Heart left ventricle (tissue), 16 donors: ENCODE measurements at regions of chr2 and their contacts with region 1.

Region 1: DNA sequence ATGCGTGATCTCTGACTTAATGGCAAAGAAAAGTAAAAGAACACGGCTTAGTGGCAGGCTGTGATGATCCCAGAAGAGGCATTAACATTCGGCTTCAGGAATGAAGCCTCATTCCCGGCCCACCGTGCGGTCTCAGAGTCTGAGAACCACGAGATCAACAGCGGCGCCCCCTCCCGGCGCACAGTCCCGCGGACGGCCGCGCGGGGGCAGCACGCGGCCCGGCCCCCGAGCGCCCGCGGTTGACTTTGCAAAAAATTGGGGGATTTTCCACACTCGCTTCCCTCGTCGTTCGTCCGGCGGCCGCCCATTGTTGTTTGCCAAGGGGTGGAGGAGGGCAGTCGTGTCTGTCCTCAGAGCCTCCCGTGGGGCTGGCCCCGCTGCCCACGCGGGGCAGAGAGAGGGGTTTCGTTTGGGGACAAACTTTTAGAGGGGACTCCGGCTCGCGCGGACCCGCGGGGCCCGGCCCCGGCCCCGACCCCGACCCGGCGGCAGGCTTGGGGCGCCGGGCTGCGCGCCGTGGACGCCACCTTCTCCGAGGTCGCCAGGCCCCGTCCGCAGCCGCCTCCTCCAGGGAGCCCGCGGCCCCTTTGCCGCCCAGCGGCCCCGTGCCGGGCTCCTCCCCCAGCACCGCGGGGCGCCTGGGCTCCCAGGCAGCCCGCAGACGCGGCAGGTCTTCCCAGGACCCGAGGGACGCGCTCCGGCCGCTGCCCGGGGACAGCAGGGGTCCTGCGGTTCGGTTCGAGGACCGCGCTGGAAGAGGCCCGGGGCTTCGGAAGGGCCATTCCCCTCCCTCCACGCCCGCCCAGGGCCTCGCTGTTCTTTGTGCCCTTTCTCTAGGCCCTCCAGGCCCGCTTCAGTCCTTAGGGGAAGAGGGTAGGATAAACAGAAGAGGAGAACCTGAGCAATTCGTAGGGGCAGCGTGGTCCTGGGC is 3.4 kb upstream of the HS6ST1 start:
- DNase-seq: peak; percentile 84 to 94 (median 88)
- ATAC-seq: peak; percentile 8 to 72 (median 70)
- H3K4me3 ChIP-seq: peak overlapping the region; percentile 31 to 76 (median 57)
- H3K27ac ChIP-seq: peak overlapping the region; percentile 18 to 79 (median 72)
- H3K4me1 ChIP-seq: peaks cover 2 to 42% (median 18%) of the 10 kb centered on the region in 12 donors
- H3K27me3 ChIP-seq: no peaks in the 10 kb centered on the region
- CTCF ChIP-seq: peak; percentile 92 to 100 (median 99)
- POLR2A ChIP-seq: peak in 1 of 2 donors; percentile 64

Region 2: DNA sequence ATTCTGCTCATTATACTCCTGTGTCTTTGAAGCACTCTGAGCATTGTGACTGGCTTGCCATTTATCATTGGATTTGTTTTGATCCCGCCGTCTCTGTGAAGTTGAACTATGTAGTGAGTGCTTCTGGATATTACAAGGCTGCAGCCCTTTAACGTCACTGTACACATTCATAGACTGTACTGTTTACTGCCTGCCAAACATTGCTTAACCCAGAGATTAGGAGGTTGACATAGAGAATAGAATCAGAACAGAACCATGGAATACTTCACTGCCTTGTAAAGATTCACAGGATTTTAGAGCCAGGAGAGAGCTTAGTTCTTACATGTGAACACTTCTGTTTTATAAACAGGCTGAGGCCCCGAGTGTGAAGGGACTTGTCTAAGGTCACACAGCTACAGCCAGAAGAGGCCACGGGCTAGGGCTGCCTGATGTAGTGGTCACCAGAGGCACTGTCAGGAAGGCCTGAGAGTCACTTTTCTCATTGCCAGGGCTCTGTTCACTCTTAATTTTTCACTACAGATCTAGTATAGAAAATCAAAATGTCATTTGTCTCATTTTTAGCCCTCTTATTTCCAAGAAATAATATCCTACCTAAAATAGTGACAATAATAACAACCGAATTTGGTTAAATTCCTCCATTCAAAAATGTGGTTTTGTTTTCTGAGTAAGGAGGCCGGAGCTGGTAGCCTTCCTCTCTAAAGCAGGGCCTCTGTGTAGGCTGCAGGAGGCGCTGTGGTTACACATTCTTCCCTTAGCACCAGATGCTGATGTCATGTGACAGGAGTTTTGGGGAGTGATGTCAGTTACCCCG is 143.2 kb before region 1 on chr2:
- intact Hi-C with region 1: loop called in 6 of 10 experiments (anchors 5 to 10 kb)
- DNase-seq: peak in 4 of 5 donors; percentile 39 to 59 (median 55)
- ATAC-seq: peak; percentile 96 to 98 (median 98)
- H3K4me3 ChIP-seq: no peak overlapping the region
- H3K27ac ChIP-seq: peak overlapping the region in 11 of 12 donors; percentile 34 to 89 (median 80)
- H3K4me1 ChIP-seq: peaks cover 0 to 15% (median 3%) of the 10 kb centered on the region in 12 donors
- H3K27me3 ChIP-seq: no peaks in the 10 kb centered on the region
- CTCF ChIP-seq: peak; percentile 38 to 84 (median 69)
- POLR2A ChIP-seq: no peak

Region 3: GRCh38 chr2:128280158-128280871 is 41.7 kb before region 1 on chr2:
- intact Hi-C with region 1: loop called in 1 of 10 experiments (anchors 5 kb)
- DNase-seq: peak in 3 of 5 donors; percentile 26 to 69 (median 48)
- ATAC-seq: peak in 3 of 4 donors; percentile 4 to 54 (median 5)
- H3K4me3 ChIP-seq: peak overlapping the region in 1 of 12 donors; percentile 15
- H3K27ac ChIP-seq: peak overlapping the region in 5 of 12 donors; percentile 23 to 78 (median 33)
- H3K4me1 ChIP-seq: peaks cover 0 to 55% (median 38%) of the 10 kb centered on the region in 12 donors
- H3K27me3 ChIP-seq: no peaks in the 10 kb centered on the region
- CTCF ChIP-seq: no peak
- POLR2A ChIP-seq: no peak

Region 4: DNA sequence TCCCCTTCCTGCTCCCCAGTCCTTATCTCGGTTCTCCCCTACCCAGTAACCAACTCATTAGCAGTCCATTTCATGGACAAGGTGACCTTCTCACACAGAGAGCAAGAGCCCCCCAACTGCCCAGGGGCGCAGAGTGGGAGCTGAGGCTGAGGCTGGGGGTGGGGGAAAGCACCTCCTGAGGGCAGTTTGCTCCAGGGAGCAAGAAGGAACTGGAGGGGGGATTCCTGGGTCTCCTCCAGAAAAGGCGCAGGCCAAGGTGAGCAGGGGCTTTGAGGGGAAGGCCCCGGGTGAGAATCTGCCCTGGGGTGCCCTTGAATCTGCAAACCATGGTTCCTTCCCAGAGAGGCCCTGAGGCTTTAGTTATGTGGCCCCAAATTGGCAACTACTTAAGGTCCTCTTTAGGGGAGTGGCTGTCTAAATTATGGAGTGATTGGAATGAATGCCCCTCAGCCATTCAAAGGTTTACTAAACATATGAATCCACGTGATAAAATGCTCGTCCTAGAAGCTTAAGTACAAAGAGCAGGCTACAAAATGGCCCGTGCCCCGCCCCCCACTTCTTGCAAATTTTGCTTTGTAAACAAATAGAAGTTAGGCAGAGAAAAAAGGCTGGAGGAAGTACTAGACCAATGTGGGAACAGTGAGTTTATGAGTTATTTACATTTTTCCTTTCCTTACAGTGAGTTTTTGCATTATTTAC is 120.2 kb after region 1 on chr2:
- intact Hi-C with region 1: loop called in 1 of 10 experiments (anchors 10 kb)
- DNase-seq: no peak
- ATAC-seq: no peak
- H3K4me3 ChIP-seq: no peak overlapping the region
- H3K27ac ChIP-seq: peak overlapping the region in 7 of 12 donors; percentile 17 to 86 (median 47)
- H3K4me1 ChIP-seq: peaks cover 0 to 46% (median 16%) of the 10 kb centered on the region in 12 donors
- H3K27me3 ChIP-seq: no peaks in the 10 kb centered on the region
- CTCF ChIP-seq: no peak
- POLR2A ChIP-seq: no peak

Region 5: DNA sequence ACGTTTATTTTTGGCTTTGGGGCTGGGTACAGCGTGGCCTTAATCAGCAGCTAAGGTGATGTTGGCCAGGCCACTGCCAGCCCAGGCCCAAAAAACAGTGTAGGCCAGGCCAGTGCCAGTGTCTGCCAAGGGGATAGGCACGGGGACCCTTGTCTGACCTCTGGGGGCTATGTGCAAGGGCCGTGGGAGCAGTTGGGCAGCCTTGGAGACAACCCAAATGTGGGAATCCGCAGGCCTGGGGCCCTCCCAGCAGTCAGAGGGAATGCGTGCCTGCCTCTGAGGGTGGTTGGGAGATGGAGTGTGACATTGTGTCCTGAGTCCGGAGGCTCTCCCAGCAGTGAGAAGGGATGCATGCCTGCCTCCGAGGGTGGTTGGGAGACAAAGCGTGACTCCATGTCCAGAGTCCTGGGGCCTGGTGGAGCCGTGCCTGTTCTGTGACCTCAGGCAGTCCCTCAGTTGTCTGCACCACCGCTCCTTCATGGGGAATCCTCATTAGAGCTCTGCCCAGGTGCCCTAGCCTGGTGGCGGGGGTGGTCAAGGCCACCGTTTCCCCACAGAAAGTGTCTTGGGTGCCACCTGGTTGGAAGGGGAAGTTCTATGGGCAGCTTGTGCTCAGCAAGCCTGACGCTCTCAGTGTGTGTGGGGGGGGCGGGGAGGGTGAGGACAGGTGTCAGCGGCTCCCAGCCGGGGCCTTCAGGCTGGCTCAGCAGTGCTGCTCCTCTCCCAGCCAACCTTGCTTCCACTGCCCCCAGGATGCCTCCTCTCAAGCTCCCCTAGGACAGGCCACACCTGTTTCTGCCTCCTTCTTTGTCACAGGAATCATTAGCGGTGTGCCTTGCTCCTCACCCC is 182.0 kb after region 1 on chr2:
- intact Hi-C with region 1: loop called in 2 of 10 experiments (anchors 10 kb)
- DNase-seq: peak in 4 of 5 donors; percentile 17 to 61 (median 46)
- ATAC-seq: peak; percentile 72 to 90 (median 81)
- H3K4me3 ChIP-seq: no peak overlapping the region
- H3K27ac ChIP-seq: peak overlapping the region in 7 of 12 donors; percentile 3 to 61 (median 42)
- H3K4me1 ChIP-seq: peaks cover 0 to 40% (median 8%) of the 10 kb centered on the region in 12 donors
- H3K27me3 ChIP-seq: no peaks in the 10 kb centered on the region
- CTCF ChIP-seq: no peak
- POLR2A ChIP-seq: no peak

Region 6: GRCh38 chr2:128536925-128537620 is 215.0 kb after region 1 on chr2:
- intact Hi-C with region 1: loop called in 7 of 10 experiments (anchors 2 to 10 kb)
- DNase-seq: no peak
- ATAC-seq: peak in 1 of 4 donors; percentile 39
- H3K4me3 ChIP-seq: no peak overlapping the region
- H3K27ac ChIP-seq: no peak overlapping the region
- H3K4me1 ChIP-seq: no peaks in the 10 kb centered on the region
- H3K27me3 ChIP-seq: no peaks in the 10 kb centered on the region
- CTCF ChIP-seq: no peak
- POLR2A ChIP-seq: no peak

Region 7: GRCh38 chr2:128710771-128711170 is 388.7 kb after region 1 on chr2:
- intact Hi-C with region 1: no loop called
- DNase-seq: no peak
- ATAC-seq: peak in 1 of 4 donors; percentile 44
- H3K4me3 ChIP-seq: no peak overlapping the region
- H3K27ac ChIP-seq: no peak overlapping the region
- H3K4me1 ChIP-seq: peaks cover 0 to 7% (median 0%) of the 10 kb centered on the region in 12 donors
- H3K27me3 ChIP-seq: peaks cover 0 to 16% (median 0%) of the 10 kb centered on the region in 9 donors
- CTCF ChIP-seq: no peak
- POLR2A ChIP-seq: no peak

Region 8: DNA sequence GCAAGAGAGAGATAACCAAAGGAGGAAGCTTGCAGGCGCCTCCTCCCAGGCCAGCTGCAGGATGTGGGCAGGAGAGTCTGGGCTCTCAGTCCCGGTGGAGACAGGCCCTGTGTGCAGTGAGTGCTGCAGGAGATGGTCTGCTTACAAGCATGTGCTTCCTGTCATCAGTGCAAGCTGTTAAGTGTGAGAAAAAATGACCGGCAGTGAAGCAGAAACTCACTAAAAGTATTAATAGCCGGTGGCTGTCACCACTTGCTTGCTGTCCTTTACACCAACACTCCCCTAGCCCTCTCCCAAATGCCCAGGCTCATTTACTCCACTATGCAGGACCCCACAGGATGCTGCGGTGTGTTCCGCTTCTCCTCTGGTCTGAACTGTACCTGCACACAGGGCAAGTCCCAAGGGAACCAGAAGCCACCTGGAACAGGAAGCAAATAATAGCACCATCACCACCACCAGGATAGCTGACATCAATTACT is 432.2 kb after region 1 on chr2:
- intact Hi-C with region 1: loop called in 3 of 10 experiments (anchors 5 to 10 kb)
- DNase-seq: peak in 4 of 5 donors; percentile 63 to 82 (median 74)
- ATAC-seq: peak; percentile 78 to 91 (median 86)
- H3K4me3 ChIP-seq: no peak overlapping the region
- H3K27ac ChIP-seq: peak overlapping the region in 2 of 12 donors; percentile 39 to 58
- H3K4me1 ChIP-seq: peaks cover 0 to 36% (median 22%) of the 10 kb centered on the region in 12 donors
- H3K27me3 ChIP-seq: peaks cover 0 to 8% (median 0%) of the 10 kb centered on the region in 9 donors
- CTCF ChIP-seq: no peak
- POLR2A ChIP-seq: no peak